Activated CD4-positive, alpha-beta memory T cell treated with anti-CD3 and anti-CD28 coated beads for 36 hours (primary cell): ENCODE measurements at regions of chr5 and their contacts with region 1.

Region 1: GRCh38 chr5:115544436-115545350 is at the start of gene FEM1C:
- DNase-seq: peak; percentile 98
- H3K4me3 Mint-ChIP-seq: peak within 1 kb of the TSS; percentile 96
- H3K27ac Mint-ChIP-seq: peak within 1 kb of the TSS; percentile 98
- H3K4me1 Mint-ChIP-seq: peaks cover 37% of the 10 kb centered on the region
- H3K27me3 Mint-ChIP-seq: no peaks in the 10 kb centered on the region
- total RNA-seq, gene FEM1C: 12.2 to 12.5 TPM

Region 2: DNA sequence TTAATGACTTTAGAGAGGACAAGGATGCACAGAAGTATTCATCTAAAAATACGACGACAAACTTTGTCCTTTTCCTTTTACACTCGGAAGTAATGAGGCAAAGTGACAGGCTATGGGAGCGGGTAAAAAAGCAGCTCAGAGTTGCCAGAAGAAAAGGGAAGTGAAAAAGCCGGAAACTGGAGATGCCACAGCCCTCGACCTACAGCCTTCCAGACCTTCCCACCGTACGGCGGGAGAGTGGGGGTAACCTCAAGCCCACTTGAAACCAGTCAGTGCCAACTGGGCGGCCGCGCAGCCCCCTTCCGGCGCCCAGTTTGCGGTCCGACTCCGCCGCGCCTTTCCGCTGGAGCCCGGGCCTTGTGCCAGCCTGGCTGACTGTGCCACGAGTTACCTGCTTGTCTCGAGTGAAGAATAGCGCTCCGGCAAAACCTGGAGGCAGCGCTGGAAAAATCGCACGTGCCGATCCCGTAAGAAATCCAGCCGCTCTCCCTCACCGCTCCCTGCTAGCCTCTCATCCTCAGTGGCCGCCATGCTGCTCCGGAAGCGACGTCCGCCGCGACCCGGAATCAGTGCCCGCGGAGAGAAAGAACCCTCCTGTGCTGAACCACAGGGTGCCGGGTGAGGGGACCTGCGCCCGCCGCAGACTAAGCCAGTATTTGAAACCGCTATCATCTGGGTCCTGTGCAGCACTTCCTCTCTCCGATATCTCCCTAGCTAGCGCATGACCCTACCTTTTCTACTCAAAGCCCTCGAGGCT is 282.2 kb before region 1 on chr5 and contains the start of gene PGGT1B:
- CTCF ChIA-PET with region 1: interaction called, 3 read pairs
- POLR2A ChIA-PET with region 1: no interaction called
- intact Hi-C with region 1: loop called (anchors 1 kb)
- DNase-seq: peak; percentile 85
- H3K4me3 Mint-ChIP-seq: peak within 1 kb of the TSS; percentile 92
- H3K27ac Mint-ChIP-seq: peak within 1 kb of the TSS; percentile 80
- H3K4me1 Mint-ChIP-seq: peaks cover 47% of the 10 kb centered on the region
- H3K27me3 Mint-ChIP-seq: no peaks in the 10 kb centered on the region
- total RNA-seq, gene PGGT1B: 38.7 TPM

Region 3: GRCh38 chr5:115377468-115378217 is 167.1 kb before region 1 on chr5:
- CTCF ChIA-PET with region 1: no interaction called
- POLR2A ChIA-PET with region 1: interaction called, 3 read pairs
- intact Hi-C with region 1: loop called (anchors 5 kb)
- DNase-seq: no peak
- H3K4me3 Mint-ChIP-seq: no peak overlapping the region
- H3K27ac Mint-ChIP-seq: no peak overlapping the region
- H3K4me1 Mint-ChIP-seq: peaks cover 17% of the 10 kb centered on the region
- H3K27me3 Mint-ChIP-seq: peaks cover 3% of the 10 kb centered on the region

Region 4: GRCh38 chr5:115472271-115473025 is 72.2 kb before region 1 on chr5:
- CTCF ChIA-PET with region 1: no interaction called
- POLR2A ChIA-PET with region 1: no interaction called
- intact Hi-C with region 1: no loop called
- DNase-seq: no peak
- H3K4me3 Mint-ChIP-seq: no peak overlapping the region
- H3K27ac Mint-ChIP-seq: no peak overlapping the region
- H3K4me1 Mint-ChIP-seq: no peaks in the 10 kb centered on the region
- H3K27me3 Mint-ChIP-seq: peaks cover 16% of the 10 kb centered on the region

Region 5: GRCh38 chr5:115501464-115502210 is 43.1 kb before region 1 on chr5:
- CTCF ChIA-PET with region 1: no interaction called
- POLR2A ChIA-PET with region 1: no interaction called
- intact Hi-C with region 1: no loop called
- DNase-seq: no peak
- H3K4me3 Mint-ChIP-seq: no peak overlapping the region
- H3K27ac Mint-ChIP-seq: no peak overlapping the region
- H3K4me1 Mint-ChIP-seq: no peaks in the 10 kb centered on the region
- H3K27me3 Mint-ChIP-seq: peaks cover 10% of the 10 kb centered on the region

Region 6: DNA sequence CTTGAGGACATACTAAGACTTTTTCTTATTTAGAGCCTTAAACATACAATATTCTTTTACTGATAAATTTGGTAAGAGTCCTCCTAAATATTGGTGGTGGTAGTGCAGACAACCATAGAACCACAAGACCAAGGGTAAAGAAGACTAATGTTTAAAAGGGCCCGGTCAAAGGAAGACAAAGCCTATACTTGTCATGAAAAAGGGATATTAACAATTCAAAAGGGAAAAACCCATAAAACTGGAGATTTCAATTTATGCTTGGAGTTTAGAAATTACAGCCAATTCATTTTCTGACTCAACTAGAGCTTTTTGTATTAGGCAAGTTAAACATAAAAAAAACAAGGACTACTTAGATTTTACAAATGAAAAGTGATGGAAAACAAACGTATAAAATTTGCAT is 24.5 kb before region 1 on chr5:
- CTCF ChIA-PET with region 1: interaction called, 4 read pairs
- POLR2A ChIA-PET with region 1: interaction called, 7 read pairs
- intact Hi-C with region 1: loop called (anchors 2 kb)
- DNase-seq: no peak
- H3K4me3 Mint-ChIP-seq: no peak overlapping the region
- H3K27ac Mint-ChIP-seq: no peak overlapping the region
- H3K4me1 Mint-ChIP-seq: peaks cover 30% of the 10 kb centered on the region
- H3K27me3 Mint-ChIP-seq: no peaks in the 10 kb centered on the region

Region 7: DNA sequence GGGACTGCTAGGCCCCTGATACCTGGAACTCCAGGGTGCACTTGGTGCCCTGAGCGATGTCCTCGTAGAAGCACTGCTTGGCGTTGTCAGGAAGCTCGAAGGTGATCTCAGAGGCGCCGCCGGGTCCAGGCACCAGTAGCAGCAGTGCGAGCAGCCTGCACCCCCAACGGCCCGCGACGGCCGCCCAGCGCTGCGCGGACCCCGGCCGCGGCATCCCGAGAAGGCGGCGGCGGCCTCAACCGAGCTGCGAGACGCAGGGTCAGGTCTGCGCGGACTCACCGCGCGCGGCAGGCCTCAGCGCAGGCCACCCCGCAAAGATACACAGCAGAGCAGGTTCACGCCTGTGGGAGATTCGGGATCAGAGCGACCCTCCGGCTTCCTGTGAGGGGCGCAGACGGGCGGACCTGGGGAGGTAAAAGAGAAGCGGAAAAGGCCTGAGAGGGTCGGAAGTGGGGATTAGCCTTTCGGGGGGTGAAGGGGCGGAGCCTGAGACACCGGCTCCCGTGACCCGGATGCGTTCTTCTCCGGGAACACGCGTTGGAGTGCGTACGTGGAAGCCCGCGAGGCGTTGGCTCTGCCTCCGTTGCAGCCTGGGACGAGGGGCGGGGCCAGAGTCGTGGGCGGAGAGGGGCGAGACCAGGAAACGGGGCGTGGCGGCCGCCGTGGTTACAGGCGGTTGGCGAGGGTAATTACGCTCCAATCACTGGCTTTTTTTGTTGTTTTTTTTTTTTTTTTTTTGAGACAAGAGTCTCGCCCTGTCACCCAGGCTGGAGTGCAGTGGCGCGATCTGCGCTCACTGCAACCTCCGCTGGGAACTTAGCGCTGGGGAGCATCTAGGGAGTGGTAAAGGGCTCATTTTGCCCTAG is 81.1 kb after region 1 on chr5 and contains the start of gene TMED7:
- CTCF ChIA-PET with region 1: no interaction called
- POLR2A ChIA-PET with region 1: interaction called, 18 read pairs
- intact Hi-C with region 1: loop called (anchors 1 kb)
- DNase-seq: peak; percentile 100
- H3K4me3 Mint-ChIP-seq: no peak within 1 kb of the TSS
- H3K27ac Mint-ChIP-seq: peak within 1 kb of the TSS; percentile 92
- H3K4me1 Mint-ChIP-seq: peaks cover 23% of the 10 kb centered on the region
- H3K27me3 Mint-ChIP-seq: no peaks in the 10 kb centered on the region
- total RNA-seq, gene TMED7: 42.2 to 44.1 TPM